Cardiac septum (tissue), 1 donor: ENCODE measurements at regions of chr9 and their contacts with region 1.

Region 1: GRCh38 chr9:131678499-131679111 is 61.3 kb downstream of the RAPGEF1 start:
- DNase-seq: peak; percentile 85

Region 2: DNA sequence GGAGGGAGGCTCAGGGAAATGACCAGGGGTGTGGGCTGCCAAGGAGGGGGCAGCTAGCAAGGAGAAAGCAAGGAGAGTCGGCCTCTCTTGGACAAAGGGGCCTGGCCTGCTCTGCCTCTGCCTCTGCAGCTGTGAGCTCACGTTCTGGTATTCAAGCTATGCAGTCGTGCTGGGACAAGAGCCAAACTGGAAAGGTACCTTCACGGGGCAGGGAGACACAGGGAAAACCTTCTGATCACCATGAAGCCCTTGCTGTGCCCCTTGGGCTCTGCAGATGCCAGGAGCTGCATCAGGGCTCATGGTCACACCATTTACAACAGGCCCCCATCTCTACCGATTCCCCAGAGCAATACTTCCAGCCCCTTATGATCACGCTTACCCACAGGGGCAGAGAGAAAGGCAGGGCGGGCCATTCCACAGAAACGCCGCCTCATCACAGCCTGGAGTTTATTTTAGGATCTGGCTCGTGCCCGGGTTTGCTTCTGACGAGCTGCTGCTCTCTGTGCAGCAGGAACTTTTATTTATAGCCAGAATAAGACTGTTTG is 70.0 kb before region 1 on chr9:
- intact Hi-C with region 1: loop called (anchors 5 kb)
- DNase-seq: no peak

Region 3: DNA sequence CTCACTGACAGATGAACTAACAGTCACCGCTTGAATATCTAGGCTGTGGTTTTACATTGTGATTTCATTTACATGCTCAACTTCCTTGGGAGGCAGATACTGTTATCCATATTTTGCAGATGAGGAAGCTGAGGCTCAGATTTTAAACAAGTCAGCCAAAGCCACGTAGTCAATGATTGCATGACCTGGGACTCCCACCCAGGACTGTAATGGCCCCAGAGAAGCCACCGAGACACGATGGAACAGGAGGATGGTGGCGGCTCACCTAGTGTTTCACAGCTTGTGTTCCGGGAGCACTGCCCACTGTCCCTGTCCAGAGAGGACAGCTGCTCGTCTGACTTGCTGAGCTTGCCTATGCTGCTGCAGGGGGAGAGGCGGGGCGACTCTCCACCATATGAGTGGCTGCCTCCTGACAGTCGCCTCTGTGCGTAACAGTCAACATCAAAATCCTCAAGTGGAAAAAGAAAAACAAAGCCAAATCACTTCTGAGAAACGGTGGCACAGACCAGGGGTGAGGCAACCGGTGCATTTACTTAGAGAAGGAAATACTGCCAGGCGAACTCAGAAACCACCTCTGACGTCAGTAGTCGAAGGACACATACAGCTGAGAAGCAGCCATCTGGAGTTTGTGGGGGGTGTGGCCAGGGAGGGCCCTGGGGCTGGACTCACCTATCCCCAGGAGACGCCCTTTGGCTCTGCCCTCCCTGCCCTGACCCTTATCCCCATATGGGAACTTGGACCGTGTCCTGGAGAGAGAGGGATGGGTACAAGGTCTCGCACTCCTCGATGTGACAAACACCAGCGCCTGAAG is 50.8 kb before region 1 on chr9:
- intact Hi-C with region 1: no loop called
- DNase-seq: peak; percentile 74

Region 4: GRCh38 chr9:131701789-131702337 is 23.3 kb after region 1 on chr9:
- intact Hi-C with region 1: loop called (anchors 2 kb)
- DNase-seq: no peak

Region 5: DNA sequence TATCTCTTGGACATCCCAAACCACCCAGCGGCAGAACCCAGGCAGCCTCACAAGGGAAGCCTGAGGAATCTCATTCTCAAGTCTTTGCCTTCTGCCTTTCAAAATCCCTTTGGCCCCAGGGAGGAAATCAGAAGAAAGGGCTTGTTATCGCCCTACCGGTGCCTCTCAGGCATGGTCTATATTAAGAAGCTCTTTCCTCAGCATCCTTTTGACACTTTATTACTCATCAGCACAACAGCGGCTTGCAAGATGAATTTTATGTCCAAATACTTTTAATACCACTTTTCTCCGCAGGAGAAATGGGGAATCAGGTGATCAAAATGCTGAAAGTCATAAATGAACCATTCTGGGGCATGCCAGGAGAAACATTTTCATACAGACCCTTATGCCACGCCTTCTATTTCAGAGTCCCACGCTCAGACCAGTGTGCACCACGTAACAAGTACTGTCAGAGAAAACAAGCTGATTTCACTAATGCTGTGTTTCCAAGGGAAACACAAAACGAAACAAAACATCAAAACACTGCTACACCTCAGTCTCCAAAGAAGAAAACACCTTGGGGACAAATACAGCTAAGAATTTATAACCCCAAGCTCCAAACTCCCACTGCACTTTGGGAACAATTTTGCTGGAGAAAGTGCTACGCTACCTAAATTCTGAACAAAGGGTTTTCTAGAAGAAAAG is 31.3 kb after region 1 on chr9:
- intact Hi-C with region 1: loop called (anchors 2 kb)
- DNase-seq: no peak

Region 6: DNA sequence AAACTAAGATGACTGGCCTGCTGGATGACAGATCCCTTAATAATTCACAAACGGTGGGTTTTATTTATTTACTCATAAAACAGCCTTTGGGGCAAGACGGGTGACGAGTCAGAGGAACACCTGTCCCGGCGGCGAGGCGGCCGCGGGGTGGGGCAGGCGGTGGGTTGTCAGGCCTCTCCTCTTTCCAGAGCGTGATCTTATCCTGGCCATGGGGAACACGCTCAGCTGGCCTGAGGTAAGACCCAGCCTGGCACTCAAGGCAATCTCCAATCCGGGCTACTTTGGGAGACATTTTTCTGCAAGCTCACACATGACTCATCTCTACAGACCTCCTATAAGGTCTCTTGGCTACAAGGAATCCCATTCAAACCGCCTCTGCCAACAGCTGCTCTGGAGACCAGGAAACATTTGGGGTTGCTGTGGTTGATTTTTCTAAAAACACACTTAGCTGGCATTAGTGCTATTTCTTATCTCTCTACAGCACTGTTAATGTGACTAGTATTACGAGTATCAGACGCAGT is 55.0 kb after region 1 on chr9:
- intact Hi-C with region 1: loop called (anchors 5 kb)
- DNase-seq: no peak